ENCODE measurements at regions of chr14 and their contacts with region 1.

Region 1: DNA sequence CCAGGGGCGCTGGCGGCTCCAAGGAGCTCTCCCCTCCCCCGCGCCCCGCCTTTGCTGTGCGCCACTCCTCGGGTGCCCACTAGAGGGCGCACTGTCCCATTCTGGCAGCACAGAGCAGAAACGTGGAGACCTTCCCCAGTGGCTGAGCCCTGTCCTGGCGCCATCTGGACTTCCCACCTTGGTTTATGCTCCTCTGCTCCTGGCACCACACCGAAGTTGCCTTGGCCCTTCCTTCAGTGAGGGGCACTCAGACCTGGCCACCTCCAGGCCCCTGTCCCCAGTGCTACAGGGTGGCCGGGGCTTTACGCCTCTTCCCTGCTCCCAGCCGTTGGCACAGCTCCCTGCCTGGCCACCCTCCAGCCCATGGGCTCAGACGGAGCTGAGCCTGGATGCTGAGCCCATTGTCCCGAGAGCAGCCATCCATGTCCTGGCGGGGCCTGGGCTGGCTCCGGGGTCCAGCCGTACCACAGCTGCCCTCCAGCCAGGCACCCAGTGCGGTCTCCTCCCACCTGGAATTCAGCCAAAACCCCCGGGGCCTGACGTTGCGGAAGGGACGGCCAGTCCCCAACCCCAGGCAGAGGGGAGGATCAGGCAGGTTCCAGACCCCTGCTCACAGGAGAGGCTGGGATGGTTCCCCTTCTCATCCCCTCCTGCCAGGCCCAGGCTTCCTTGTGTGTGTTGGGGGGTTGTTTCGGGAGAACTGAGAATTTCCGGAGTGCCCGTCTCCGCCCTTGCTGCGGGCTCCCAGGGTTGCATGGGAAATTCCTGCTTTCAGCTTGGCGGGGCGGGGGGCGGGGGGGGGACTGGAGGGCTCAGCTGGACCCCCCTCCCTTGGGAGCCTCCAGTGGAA is 5.5 kb upstream of the CRIP1 start:
- DNase-seq: peak; percentile 94
- ATAC-seq: peak; percentile 52
- H3K4me3 ChIP-seq: peak overlapping the region in 4 of 5 experiments; percentile 44 to 66 (median 52)
- H3K4me3 Mint-ChIP-seq: peak overlapping the region; percentile 84
- H3K27ac ChIP-seq: peak overlapping the region; percentile 93 to 99
- H3K27ac Mint-ChIP-seq: peak overlapping the region; percentile 100
- H3K4me1 ChIP-seq: peaks cover 59 to 88% of the 10 kb centered on the region in 2 donors
- H3K4me1 Mint-ChIP-seq: peaks cover 67% of the 10 kb centered on the region
- H3K27me3 ChIP-seq: peaks cover 0 to 13% (median 4%) of the 10 kb centered on the region in 4 experiments
- H3K27me3 Mint-ChIP-seq: no peaks in the 10 kb centered on the region
- CTCF ChIP-seq: peak; percentile 95

Region 2: DNA sequence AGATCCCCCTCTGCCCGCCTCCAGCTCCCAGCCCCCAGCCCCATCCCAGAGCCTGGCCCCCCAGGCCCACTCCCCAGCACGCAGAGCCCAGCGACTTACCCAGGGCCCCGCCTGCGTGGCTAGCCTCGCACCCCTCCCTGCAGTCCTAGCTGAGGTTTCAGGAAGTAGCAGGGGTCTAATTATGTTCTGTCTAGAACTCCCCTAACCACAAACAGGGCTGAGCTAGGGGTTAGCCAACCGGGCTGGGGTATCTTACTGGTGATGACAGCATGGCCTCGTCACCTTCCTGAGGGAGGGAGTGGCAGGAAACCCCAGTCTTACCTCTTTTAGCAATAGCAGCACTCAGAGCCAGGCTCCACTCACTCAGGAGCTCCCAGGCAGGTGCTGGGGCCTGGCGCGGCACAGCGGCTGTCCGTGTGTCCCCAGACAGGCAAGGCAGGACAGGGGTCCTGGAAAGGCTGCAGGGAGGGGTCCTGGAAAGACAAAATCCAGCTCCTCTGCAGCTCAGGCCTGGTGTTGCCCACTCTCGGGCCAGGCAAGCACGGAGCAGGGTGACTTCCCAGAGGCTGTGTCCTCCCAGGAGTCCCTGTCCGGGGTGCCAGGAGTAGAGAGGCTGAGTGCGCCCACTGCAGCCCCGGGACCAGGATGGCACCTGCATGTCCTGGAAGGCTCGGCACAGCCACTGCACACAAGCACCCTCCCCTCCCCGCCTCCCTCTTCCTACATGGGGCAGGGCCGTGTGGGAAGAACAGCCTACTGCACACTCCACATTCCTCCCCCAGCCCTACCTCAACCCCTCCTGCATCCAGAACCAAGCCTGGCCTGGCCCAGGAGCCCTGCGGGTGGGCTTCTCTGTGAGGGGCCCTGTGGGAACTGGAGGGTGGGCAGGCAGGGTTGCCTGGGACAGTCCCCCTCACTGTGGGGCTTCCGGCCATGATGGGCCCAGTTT is 415.6 kb before region 1 on chr14 and contains the start of gene GPR132:
- CTCF ChIA-PET with region 1: no interaction called
- POLR2A ChIA-PET with region 1: interaction called, 5 read pairs
- intact Hi-C with region 1: loop called (anchors 10 kb)
- DNase-seq: peak; percentile 96
- ATAC-seq: peak; percentile 78
- H3K4me3 ChIP-seq: peak within 1 kb of the TSS; percentile 81 to 100 (median 91)
- H3K4me3 Mint-ChIP-seq: peak within 1 kb of the TSS; percentile 87
- H3K27ac ChIP-seq: peak within 1 kb of the TSS; percentile 93 to 98
- H3K27ac Mint-ChIP-seq: peak within 1 kb of the TSS; percentile 98
- H3K4me1 ChIP-seq: peaks cover 79 to 95% of the 10 kb centered on the region in 2 donors
- H3K4me1 Mint-ChIP-seq: peaks cover 82% of the 10 kb centered on the region
- H3K27me3 ChIP-seq: no peaks in the 10 kb centered on the region
- H3K27me3 Mint-ChIP-seq: no peaks in the 10 kb centered on the region
- CTCF ChIP-seq: no peak
- total RNA-seq, gene GPR132: 54.5 and 63.2 TPM in 2 replicates

Region 3: GRCh38 chr14:105086833-105087307 is 394.3 kb before region 1 on chr14:
- CTCF ChIA-PET with region 1: no interaction called
- POLR2A ChIA-PET with region 1: no interaction called
- intact Hi-C with region 1: no loop called
- DNase-seq: peak; percentile 89
- ATAC-seq: peak; percentile 86
- H3K4me3 ChIP-seq: peak overlapping the region in 4 of 5 experiments; percentile 55 to 67 (median 60)
- H3K4me3 Mint-ChIP-seq: peak overlapping the region; percentile 85
- H3K27ac ChIP-seq: peak overlapping the region in 1 of 2 donors; percentile 26
- H3K27ac Mint-ChIP-seq: peak overlapping the region; percentile 37
- H3K4me1 ChIP-seq: peaks cover 9 to 17% of the 10 kb centered on the region in 2 donors
- H3K4me1 Mint-ChIP-seq: peaks cover 16% of the 10 kb centered on the region
- H3K27me3 ChIP-seq: peaks cover 0 to 30% (median 9%) of the 10 kb centered on the region in 4 experiments
- H3K27me3 Mint-ChIP-seq: peaks cover 16% of the 10 kb centered on the region
- CTCF ChIP-seq: peak; percentile 78

Region 4: DNA sequence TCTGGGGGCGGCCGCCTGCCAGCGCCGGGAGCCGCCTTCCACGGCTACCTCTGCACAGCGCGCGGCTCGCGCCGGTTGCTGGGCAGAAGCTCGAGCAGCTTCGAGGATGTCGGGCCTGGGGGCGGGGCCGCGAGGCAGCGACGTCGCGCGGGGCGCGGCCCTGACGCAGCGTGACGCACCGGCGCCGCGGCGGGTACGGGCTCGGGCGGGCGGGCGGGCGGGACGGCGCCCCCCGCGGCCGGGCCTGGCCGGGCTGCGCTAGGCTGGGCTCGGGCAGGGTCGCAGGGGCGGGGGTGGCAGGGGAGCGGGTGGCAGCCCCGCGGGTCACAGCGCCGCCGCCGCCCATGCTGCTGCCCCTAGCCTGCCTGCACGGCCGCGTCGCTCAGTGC is 232.8 kb before region 1 on chr14 and contains the start of gene BTBD6:
- CTCF ChIA-PET with region 1: no interaction called
- POLR2A ChIA-PET with region 1: no interaction called
- intact Hi-C with region 1: no loop called
- DNase-seq: peak; percentile 93
- ATAC-seq: peak; percentile 92
- H3K4me3 ChIP-seq: peak within 1 kb of the TSS; percentile 64 to 73 (median 71)
- H3K4me3 Mint-ChIP-seq: peak within 1 kb of the TSS; percentile 86
- H3K27ac ChIP-seq: peak within 1 kb of the TSS; percentile 48 to 61
- H3K27ac Mint-ChIP-seq: peak within 1 kb of the TSS; percentile 72
- H3K4me1 ChIP-seq: peaks cover 10 to 16% of the 10 kb centered on the region in 2 donors
- H3K4me1 Mint-ChIP-seq: peaks cover 36% of the 10 kb centered on the region
- H3K27me3 ChIP-seq: no peaks in the 10 kb centered on the region
- H3K27me3 Mint-ChIP-seq: no peaks in the 10 kb centered on the region
- CTCF ChIP-seq: no peak
- total RNA-seq, gene BTBD6: 33.5 and 36.1 TPM in 2 replicates

Region 5: DNA sequence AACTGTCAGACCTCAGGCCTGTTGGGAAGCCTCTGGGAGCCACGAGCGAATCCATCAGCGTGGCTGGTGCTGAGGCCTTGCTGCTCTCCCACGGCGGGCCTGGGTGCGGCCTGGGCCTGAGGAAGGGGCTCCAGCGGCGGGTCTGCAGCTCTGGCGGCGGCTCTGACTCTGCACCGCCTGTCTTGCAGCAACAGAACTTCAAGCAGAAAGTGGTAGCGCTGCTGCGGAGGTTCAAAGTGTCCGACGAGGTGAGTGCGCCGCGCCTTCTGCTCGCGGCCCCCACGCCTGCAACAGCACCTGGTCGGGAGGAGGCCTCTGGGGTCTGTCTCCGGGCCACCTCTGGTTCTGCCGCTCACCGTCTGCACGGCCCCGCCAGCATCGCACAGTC is 111.5 kb before region 1 on chr14:
- CTCF ChIA-PET with region 1: interaction called, 17 read pairs
- POLR2A ChIA-PET with region 1: interaction called, 3 read pairs
- intact Hi-C with region 1: no loop called
- DNase-seq: no peak
- ATAC-seq: no peak
- H3K4me3 ChIP-seq: no peak overlapping the region
- H3K4me3 Mint-ChIP-seq: no peak overlapping the region
- H3K27ac ChIP-seq: no peak overlapping the region
- H3K27ac Mint-ChIP-seq: no peak overlapping the region
- H3K4me1 ChIP-seq: peaks cover 5 to 11% of the 10 kb centered on the region in 2 donors
- H3K4me1 Mint-ChIP-seq: peaks cover 3% of the 10 kb centered on the region
- H3K27me3 ChIP-seq: no peaks in the 10 kb centered on the region
- H3K27me3 Mint-ChIP-seq: no peaks in the 10 kb centered on the region
- CTCF ChIP-seq: no peak

Region 6: GRCh38 chr14:105384041-105384737 is 97.0 kb before region 1 on chr14:
- CTCF ChIA-PET with region 1: no interaction called
- POLR2A ChIA-PET with region 1: no interaction called
- intact Hi-C with region 1: no loop called
- DNase-seq: no peak
- ATAC-seq: no peak
- H3K4me3 ChIP-seq: no peak overlapping the region
- H3K4me3 Mint-ChIP-seq: no peak overlapping the region
- H3K27ac ChIP-seq: no peak overlapping the region
- H3K27ac Mint-ChIP-seq: no peak overlapping the region
- H3K4me1 ChIP-seq: no peaks in the 10 kb centered on the region
- H3K4me1 Mint-ChIP-seq: peaks cover 1% of the 10 kb centered on the region
- H3K27me3 ChIP-seq: no peaks in the 10 kb centered on the region
- H3K27me3 Mint-ChIP-seq: no peaks in the 10 kb centered on the region
- CTCF ChIP-seq: no peak

Region 7: DNA sequence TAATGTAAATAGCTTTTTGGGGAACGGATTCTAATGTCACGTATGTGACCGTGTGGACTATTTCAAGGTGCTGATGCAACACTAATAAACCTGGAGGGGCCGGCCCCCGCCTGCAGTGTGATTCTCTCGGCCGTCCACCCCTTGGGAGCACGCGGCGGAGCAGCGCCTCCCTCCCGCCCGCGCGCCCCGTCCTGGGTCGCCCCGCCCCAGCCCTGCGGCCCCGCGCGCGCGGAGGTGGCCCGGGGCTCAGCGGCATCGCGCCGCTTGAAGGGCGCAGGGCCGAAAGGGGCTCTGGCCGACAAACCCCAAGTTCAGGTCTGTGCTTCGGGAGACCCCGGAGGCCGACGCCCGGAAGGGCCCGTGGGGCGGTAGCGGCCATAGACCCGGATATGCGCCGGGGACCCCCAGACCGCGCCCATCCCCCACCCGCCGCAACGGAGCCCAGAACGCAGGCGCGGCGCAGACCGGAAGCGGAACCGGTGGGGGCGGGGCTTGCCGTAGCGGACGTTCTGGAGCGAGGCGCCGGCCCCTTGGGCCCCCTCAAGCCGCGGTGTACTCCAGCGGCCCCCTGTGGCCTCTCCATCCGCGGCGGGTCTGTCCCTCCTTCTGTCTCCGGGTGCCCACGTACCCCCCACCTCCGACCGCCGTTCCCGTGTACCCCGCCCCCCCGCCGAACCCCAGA is 83.0 kb before region 1 on chr14 and contains the start of gene TEX22:
- CTCF ChIA-PET with region 1: interaction called, 5 read pairs
- POLR2A ChIA-PET with region 1: interaction called, 3 read pairs
- intact Hi-C with region 1: loop called (anchors 1 kb)
- DNase-seq: peak; percentile 93
- ATAC-seq: peak; percentile 88
- H3K4me3 ChIP-seq: peak within 1 kb of the TSS; percentile 31 to 94 (median 86)
- H3K4me3 Mint-ChIP-seq: peak within 1 kb of the TSS; percentile 90
- H3K27ac ChIP-seq: peak within 1 kb of the TSS; percentile 75 to 86
- H3K27ac Mint-ChIP-seq: peak within 1 kb of the TSS; percentile 91
- H3K4me1 ChIP-seq: peaks cover 16 to 23% of the 10 kb centered on the region in 2 donors
- H3K4me1 Mint-ChIP-seq: peaks cover 16% of the 10 kb centered on the region
- H3K27me3 ChIP-seq: no peaks in the 10 kb centered on the region
- H3K27me3 Mint-ChIP-seq: no peaks in the 10 kb centered on the region
- CTCF ChIP-seq: peak; percentile 36
- total RNA-seq, gene TEX22: 7.0 and 8.4 TPM in 2 replicates

Region 8: GRCh38 chr14:105605821-105606506 is 124.8 kb after region 1 on chr14:
- CTCF ChIA-PET with region 1: no interaction called
- POLR2A ChIA-PET with region 1: no interaction called
- intact Hi-C with region 1: no loop called
- DNase-seq: no peak
- ATAC-seq: no peak
- H3K4me3 ChIP-seq: no peak overlapping the region
- H3K4me3 Mint-ChIP-seq: no peak overlapping the region
- H3K27ac ChIP-seq: peak overlapping the region in 1 of 2 donors; percentile 47
- H3K27ac Mint-ChIP-seq: peak overlapping the region; percentile 15
- H3K4me1 ChIP-seq: peaks cover 0 to 36% of the 10 kb centered on the region in 2 donors
- H3K4me1 Mint-ChIP-seq: peaks cover 18% of the 10 kb centered on the region
- H3K27me3 ChIP-seq: no peaks in the 10 kb centered on the region
- H3K27me3 Mint-ChIP-seq: no peaks in the 10 kb centered on the region
- CTCF ChIP-seq: no peak

Region 9: GRCh38 chr14:105640936-105641843 is 160.0 kb after region 1 on chr14:
- CTCF ChIA-PET with region 1: no interaction called
- POLR2A ChIA-PET with region 1: interaction called, 12 read pairs
- intact Hi-C with region 1: no loop called
- DNase-seq: no peak
- ATAC-seq: no peak
- H3K4me3 ChIP-seq: no peak overlapping the region
- H3K4me3 Mint-ChIP-seq: no peak overlapping the region
- H3K27ac ChIP-seq: no peak overlapping the region
- H3K27ac Mint-ChIP-seq: peak overlapping the region; percentile 74
- H3K4me1 ChIP-seq: peaks cover 0 to 11% of the 10 kb centered on the region in 2 donors
- H3K4me1 Mint-ChIP-seq: peaks cover 14% of the 10 kb centered on the region
- H3K27me3 ChIP-seq: no peaks in the 10 kb centered on the region
- H3K27me3 Mint-ChIP-seq: no peaks in the 10 kb centered on the region
- CTCF ChIP-seq: no peak

Measured in B cell (primary cell).